ENCODE measurements at regions of chr7 and their contacts with region 1.

Region 1: GRCh38 chr7:101856473-101857357 is 39.3 kb downstream of the CUX1 start:
- DNase-seq: peak; percentile 53 to 93 (median 72)
- ATAC-seq: peak; percentile 94
- H3K4me3 ChIP-seq: peak overlapping the region; percentile 60
- H3K4me3 Mint-ChIP-seq: peak overlapping the region; percentile 97
- H3K27ac ChIP-seq: peak overlapping the region; percentile 64 to 83
- H3K27ac Mint-ChIP-seq: peak overlapping the region; percentile 95
- H3K4me1 ChIP-seq: peaks cover 21% of the 10 kb centered on the region
- H3K4me1 Mint-ChIP-seq: peaks cover 62% of the 10 kb centered on the region
- H3K27me3 ChIP-seq: no peaks in the 10 kb centered on the region
- H3K27me3 Mint-ChIP-seq: no peaks in the 10 kb centered on the region
- CTCF ChIP-seq: peak; percentile 63

Region 2: DNA sequence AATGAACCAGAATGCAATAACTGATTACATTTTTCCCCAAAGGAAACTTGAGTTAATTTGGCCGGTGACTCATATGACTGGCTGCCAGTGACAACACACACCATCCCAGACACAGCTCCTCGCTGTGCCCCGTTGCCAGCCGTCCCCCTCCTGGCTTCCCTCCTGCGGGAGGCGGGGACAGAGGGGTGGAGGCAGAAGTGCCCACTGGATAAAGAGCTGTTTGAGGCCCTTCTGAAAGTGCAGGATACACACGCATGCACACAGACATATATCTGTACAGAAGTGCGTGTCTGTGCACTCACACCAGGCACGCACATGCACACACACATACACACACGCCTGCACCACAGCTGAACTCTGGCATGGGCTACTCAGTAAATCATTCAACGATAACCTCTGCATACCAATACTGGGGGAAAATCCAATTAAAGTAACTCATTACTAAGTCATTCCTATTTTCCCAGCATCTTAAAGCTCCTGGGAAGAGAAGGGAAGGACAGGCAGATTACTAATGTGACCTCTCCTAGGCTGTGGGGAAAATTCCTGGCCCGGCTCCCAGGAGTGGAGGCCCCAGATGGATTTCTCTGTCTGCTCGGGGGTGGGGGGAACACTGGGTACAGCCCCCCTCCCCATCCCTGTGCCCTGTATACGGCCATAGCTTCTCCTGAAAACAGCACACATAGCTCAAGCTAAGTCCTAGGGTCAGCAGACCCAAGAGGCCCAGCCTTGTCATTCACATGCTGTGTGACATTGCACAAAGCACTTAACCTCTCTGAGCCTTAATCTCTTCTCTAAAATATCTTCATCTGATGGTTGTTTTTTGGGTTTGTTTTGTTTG is 175.3 kb before region 1 on chr7:
- CTCF ChIA-PET with region 1: no interaction called
- POLR2A ChIA-PET with region 1: no interaction called
- intact Hi-C with region 1: no loop called
- DNase-seq: no peak
- ATAC-seq: no peak
- H3K4me3 ChIP-seq: no peak overlapping the region
- H3K4me3 Mint-ChIP-seq: no peak overlapping the region
- H3K27ac ChIP-seq: no peak overlapping the region
- H3K27ac Mint-ChIP-seq: no peak overlapping the region
- H3K4me1 ChIP-seq: no peaks in the 10 kb centered on the region
- H3K4me1 Mint-ChIP-seq: no peaks in the 10 kb centered on the region
- H3K27me3 ChIP-seq: no peaks in the 10 kb centered on the region
- H3K27me3 Mint-ChIP-seq: no peaks in the 10 kb centered on the region
- CTCF ChIP-seq: no peak

Region 3: DNA sequence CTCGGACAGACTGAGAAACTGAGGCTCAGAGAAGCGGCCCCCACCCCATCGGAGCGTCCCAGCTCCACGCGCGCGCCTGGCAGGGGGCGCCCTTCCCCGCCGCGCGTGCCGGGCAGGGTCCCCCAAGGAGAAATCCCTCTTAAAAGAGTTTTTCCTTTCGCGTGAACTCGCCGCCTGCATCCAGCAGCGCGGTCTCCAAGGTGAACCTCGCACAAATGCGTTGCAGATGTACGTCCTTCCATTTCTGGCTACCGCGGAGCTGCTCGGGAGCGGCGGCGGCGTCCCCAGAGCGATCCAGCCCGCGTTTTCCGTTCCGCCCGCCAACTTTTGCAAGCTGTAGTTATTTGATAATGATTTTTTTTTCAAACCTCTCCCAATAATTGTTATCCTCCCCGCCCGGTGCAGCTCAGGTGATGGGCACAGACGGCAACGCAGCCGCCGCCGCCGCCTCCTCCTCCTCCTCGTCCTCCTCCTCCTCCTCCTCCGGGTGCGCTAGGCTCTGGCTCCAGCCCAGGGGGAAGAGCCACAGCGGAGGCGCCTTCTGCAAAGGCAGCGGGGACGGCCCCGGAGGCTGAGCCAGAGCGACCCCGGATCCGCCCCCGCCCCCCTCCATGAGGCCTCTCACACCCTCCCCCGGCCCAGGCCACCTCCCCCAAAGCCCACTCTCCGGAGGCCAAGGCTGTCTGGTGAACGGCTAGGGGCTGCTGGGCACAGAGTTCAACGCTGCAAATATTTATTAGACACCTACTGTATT is 113.3 kb before region 1 on chr7:
- CTCF ChIA-PET with region 1: interaction called, 10 read pairs
- POLR2A ChIA-PET with region 1: no interaction called
- intact Hi-C with region 1: no loop called
- DNase-seq: peak; percentile 42 to 78 (median 62)
- ATAC-seq: peak; percentile 87
- H3K4me3 ChIP-seq: peak overlapping the region; percentile 57
- H3K4me3 Mint-ChIP-seq: peak overlapping the region; percentile 83
- H3K27ac ChIP-seq: no peak overlapping the region
- H3K27ac Mint-ChIP-seq: no peak overlapping the region
- H3K4me1 ChIP-seq: peaks cover 30% of the 10 kb centered on the region
- H3K4me1 Mint-ChIP-seq: peaks cover 6% of the 10 kb centered on the region
- H3K27me3 ChIP-seq: peaks cover 0 to 2% of the 10 kb centered on the region in 2 experiments
- H3K27me3 Mint-ChIP-seq: no peaks in the 10 kb centered on the region
- CTCF ChIP-seq: peak; percentile 71

Measured in CD4-positive, alpha-beta T cell (primary cell).